ENCODE measurements at regions of chr12 and their contacts with region 1.

Region 1: DNA sequence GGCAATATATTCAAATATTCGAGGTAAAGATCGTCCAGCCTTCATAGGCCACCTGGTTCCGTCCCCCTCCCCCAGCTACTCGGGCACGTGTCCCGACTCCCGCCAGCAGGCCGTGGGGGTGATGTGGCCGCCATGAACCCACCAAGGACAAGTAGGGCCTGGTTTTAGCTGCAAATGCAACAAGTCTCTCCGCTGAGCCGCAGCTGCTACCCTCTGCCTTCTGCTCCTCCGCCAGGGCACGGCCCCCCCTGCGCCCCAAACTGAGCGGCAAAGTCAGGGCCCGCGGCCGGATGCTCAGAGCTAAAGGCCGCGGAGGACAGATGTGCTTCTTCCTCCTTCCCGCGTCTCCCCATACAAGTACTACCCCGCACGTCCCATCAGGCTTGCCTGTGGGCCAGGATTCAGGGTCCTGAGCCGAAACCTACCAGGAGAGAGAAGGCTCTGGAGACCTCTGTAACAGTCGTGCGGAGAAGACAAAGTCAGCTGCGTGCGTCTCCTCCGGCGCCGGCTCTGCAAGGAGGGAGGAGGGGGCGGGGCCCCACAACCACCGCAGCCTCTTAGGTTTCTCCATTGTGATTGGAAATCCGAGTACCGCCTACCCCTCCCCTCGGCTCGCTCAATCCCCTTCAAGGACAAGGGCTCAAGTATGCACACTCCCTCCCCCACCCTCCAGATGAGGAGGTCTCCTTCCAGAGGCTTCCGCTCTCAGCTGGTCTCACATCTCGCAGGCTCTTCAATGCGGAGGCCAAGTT is at the start of gene LDHB:
- DNase-seq: peak; percentile 95
- H3K4me3 ChIP-seq: peak within 1 kb of the TSS; percentile 55 to 59
- H3K27ac ChIP-seq: peak within 1 kb of the TSS; percentile 76 to 80
- H3K4me1 ChIP-seq: no peaks in the 10 kb centered on the region
- H3K27me3 ChIP-seq: no peaks in the 10 kb centered on the region
- CTCF ChIP-seq: no peak
- POLR2A ChIP-seq: peak; percentile 82
- total RNA-seq, gene LDHB: 249 to 280 TPM

Region 2: GRCh38 chr12:21413369-21414277 is 243.9 kb before region 1 on chr12:
- intact Hi-C with region 1: no loop called
- DNase-seq: no peak
- H3K4me3 ChIP-seq: no peak overlapping the region
- H3K27ac ChIP-seq: no peak overlapping the region
- H3K4me1 ChIP-seq: no peaks in the 10 kb centered on the region
- H3K27me3 ChIP-seq: no peaks in the 10 kb centered on the region
- CTCF ChIP-seq: no peak
- POLR2A ChIP-seq: no peak

Region 3: GRCh38 chr12:21483531-21483930 is 174.0 kb before region 1 on chr12:
- intact Hi-C with region 1: no loop called
- DNase-seq: no peak
- H3K4me3 ChIP-seq: no peak overlapping the region
- H3K27ac ChIP-seq: no peak overlapping the region
- H3K4me1 ChIP-seq: no peaks in the 10 kb centered on the region
- H3K27me3 ChIP-seq: no peaks in the 10 kb centered on the region
- CTCF ChIP-seq: no peak
- POLR2A ChIP-seq: no peak

Region 4: DNA sequence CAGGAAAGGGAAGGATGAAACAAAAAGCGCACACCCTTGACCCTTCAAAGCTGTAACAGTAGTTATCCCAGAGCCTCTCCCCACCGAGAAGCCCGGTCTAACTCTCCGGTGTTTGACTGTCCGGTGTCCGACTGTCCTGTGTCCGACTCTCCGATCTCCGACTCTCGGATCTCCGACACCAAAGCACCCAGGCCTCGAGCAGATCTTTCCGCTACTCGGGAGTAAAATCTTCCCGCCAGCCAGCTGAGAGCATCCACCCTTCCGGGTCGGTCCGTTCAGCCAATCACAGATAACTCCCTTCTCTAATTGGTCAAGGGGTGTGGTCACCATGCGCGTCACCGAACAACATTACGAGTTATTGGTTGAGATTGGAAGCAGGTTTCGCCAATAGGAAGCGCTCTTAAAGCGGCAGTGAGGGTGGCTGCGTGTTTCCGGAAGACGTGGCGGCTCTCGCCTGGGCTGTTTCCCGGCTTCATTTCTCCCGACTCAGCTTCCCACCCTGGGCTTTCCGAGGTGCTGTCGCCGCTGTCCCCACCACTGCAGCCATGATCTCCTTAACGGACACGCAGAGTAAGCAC is 156.0 kb before region 1 on chr12 and contains the starts of genes GOLT1B and RECQL:
- intact Hi-C with region 1: loop called (anchors 5 kb)
- DNase-seq: peak; percentile 97
- H3K4me3 ChIP-seq: peak within 1 kb of the TSS; percentile 89 to 93
- H3K27ac ChIP-seq: peak within 1 kb of the TSS; percentile 77 to 83
- H3K4me1 ChIP-seq: peaks cover 10% of the 10 kb centered on the region
- H3K27me3 ChIP-seq: no peaks in the 10 kb centered on the region
- CTCF ChIP-seq: no peak
- POLR2A ChIP-seq: peak; percentile 27
- total RNA-seq, gene GOLT1B: 13.9 to 21.0 TPM
- total RNA-seq, gene RECQL: 19.8 to 23.3 TPM